B cell (primary cell): ENCODE measurements at regions of chrX and their contacts with region 1.

Region 1: DNA sequence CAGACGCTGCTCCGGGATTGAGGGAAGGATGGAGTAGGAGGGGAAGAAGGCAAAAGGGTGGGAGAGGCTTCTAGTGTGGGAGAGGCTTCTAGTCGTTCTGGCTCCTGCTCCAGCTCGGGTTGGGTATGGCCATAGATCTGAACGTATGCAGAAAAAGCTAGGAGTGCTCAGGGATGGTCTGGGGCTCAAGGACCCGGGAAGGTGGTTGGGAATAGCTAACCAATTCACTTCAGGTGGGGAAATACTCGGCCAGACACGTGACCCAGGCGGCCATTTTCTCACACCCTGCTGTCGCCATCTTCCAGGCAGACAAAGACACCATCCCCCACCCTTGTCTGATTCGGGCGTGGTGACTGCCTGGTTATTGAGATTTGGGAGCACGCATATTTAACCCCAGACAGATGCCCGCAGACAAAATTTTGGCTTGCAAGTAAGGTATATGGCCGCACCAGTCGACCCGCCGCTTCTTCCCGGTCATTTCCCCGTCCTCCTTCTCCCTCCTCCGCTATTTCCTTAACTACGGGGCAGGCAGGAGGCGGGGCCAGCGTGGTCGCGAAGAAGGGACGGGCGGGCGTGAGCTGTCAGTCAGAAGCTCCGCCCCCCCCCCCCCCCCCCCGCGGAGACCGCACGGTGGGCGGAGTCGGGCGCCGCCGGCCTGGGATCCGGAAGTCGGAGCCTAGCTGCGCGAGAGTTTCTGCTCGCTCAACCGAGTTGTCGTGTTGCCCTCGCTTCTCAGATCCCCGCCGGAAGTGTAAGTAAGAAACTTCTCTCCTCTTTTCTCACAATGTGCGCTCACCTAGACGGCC is at the start of gene GNL3L:
- DNase-seq: peak; percentile 89
- ATAC-seq: peak; percentile 86
- H3K4me3 ChIP-seq: peak within 1 kb of the TSS; percentile 64 to 93 (median 75)
- H3K4me3 Mint-ChIP-seq: peak within 1 kb of the TSS; percentile 93
- H3K27ac ChIP-seq: peak within 1 kb of the TSS; percentile 89 to 91
- H3K27ac Mint-ChIP-seq: peak within 1 kb of the TSS; percentile 97
- H3K4me1 ChIP-seq: peaks cover 13 to 31% of the 10 kb centered on the region in 2 donors
- H3K4me1 Mint-ChIP-seq: peaks cover 34% of the 10 kb centered on the region
- H3K27me3 ChIP-seq: no peaks in the 10 kb centered on the region
- H3K27me3 Mint-ChIP-seq: no peaks in the 10 kb centered on the region
- CTCF ChIP-seq: no peak
- total RNA-seq, gene GNL3L: 47.2 and 52.4 TPM in 2 replicates

Region 2: DNA sequence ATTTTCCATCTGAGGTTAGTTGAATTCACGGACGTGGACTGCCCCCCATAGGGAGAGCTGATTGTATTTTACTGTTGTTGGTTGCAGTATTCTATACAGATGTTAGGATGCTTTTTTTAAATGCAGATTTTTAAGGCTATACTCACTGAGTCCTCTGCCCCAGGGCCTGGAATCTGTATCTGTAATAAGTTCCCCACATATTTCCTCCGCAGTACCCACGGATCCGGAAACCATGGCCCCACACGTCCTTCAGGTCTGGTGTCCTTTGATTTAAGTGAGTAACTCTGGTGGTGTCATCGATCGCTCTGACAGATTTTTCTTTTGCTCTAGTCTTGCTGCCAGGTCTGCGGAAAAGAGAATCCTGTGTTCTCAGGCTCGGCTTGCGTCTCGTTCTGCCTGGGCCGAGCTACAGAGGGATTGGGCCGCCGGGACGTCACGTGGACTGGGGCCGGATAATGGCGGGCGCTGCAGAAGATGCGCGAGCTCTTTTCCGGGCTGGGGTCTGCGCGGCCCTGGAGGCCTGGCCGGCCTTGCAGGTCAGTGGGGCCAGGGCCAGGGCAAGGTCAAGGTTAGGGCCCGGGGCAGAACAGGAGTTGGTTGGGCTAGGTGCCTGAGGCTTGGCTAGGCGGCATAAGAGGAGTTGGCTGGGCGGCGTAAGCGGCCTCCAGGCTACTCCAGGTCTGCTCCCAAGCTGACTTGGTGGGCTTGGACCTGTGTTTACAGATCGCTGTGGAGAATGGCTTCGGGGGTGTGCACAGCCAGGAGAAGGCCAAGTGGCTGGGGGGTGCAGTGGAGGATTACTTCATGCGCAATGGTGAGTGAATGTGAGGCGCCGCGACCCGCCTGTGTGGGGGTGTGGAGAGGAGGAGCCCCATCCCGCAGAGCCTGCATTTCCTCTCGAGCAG is 89.5 kb before region 1 on chrX and contains the start of gene TSR2:
- CTCF ChIA-PET with region 1: no interaction called
- POLR2A ChIA-PET with region 1: no interaction called
- intact Hi-C with region 1: loop called (anchors 1 kb)
- DNase-seq: peak; percentile 81
- ATAC-seq: peak; percentile 99
- H3K4me3 ChIP-seq: peak within 1 kb of the TSS; percentile 70 to 92 (median 84)
- H3K4me3 Mint-ChIP-seq: peak within 1 kb of the TSS; percentile 94
- H3K27ac ChIP-seq: peak within 1 kb of the TSS; percentile 50 to 70
- H3K27ac Mint-ChIP-seq: peak within 1 kb of the TSS; percentile 89
- H3K4me1 ChIP-seq: peaks cover 14 to 19% of the 10 kb centered on the region in 2 donors
- H3K4me1 Mint-ChIP-seq: peaks cover 25% of the 10 kb centered on the region
- H3K27me3 ChIP-seq: no peaks in the 10 kb centered on the region
- H3K27me3 Mint-ChIP-seq: no peaks in the 10 kb centered on the region
- CTCF ChIP-seq: no peak
- total RNA-seq, gene TSR2: 38.3 and 41.4 TPM in 2 replicates